ENCODE measurements at regions of chr6 and their contacts with region 1.

Region 1: GRCh38 chr6:148157542-148158240 is 184.9 kb upstream of the SASH1 start:
- DNase-seq: no peak
- ATAC-seq: no peak
- H3K4me3 ChIP-seq: no peak overlapping the region
- H3K27ac ChIP-seq: no peak overlapping the region
- H3K4me1 ChIP-seq: peaks cover 2% of the 10 kb centered on the region
- H3K27me3 ChIP-seq: no peaks in the 10 kb centered on the region

Region 2: GRCh38 chr6:147390909-147391536 is 766.7 kb before region 1 on chr6:
- intact Hi-C with region 1: loop called in 1 of 4 experiments (anchors 10 kb)
- DNase-seq: no peak
- ATAC-seq: no peak
- H3K4me3 ChIP-seq: no peak overlapping the region
- H3K27ac ChIP-seq: no peak overlapping the region
- H3K4me1 ChIP-seq: no peaks in the 10 kb centered on the region
- H3K27me3 ChIP-seq: no peaks in the 10 kb centered on the region

Region 3: DNA sequence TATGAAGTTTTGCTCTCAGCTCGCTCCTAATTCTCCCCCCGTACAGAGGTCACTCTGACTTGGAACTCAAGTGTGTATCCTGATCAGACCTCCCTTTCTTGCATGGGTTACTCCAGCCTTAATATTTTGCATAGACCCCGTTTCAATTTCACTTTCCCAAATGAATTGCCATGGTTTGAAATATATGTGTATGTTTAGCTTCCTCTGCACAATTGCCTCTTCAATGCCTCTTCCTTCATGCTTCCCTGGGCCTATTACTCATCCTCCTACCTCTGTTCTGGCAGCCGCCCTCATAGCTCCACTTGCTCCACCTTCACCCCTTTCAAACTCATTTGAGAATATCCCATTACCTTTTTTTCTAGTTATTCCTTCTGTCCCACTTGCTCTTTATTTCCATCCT is 739.2 kb before region 1 on chr6:
- intact Hi-C with region 1: no loop called
- DNase-seq: no peak
- ATAC-seq: no peak
- H3K4me3 ChIP-seq: no peak overlapping the region
- H3K27ac ChIP-seq: no peak overlapping the region
- H3K4me1 ChIP-seq: no peaks in the 10 kb centered on the region
- H3K27me3 ChIP-seq: no peaks in the 10 kb centered on the region

Region 4: GRCh38 chr6:147839708-147840610 is 317.7 kb before region 1 on chr6:
- intact Hi-C with region 1: no loop called
- DNase-seq: no peak
- ATAC-seq: no peak
- H3K4me3 ChIP-seq: no peak overlapping the region
- H3K27ac ChIP-seq: no peak overlapping the region
- H3K4me1 ChIP-seq: no peaks in the 10 kb centered on the region
- H3K27me3 ChIP-seq: no peaks in the 10 kb centered on the region